ENCODE measurements at regions of chr6 and their contacts with region 1.

Region 1: GRCh38 chr6:132669690-132670291 is 10.8 kb upstream of the TAAR1 start:
- DNase-seq: no peak
- ATAC-seq: peak; percentile 52 to 65
- H3K4me3 ChIP-seq: no peak overlapping the region
- H3K27ac ChIP-seq: no peak overlapping the region
- H3K4me1 ChIP-seq: no peaks in the 10 kb centered on the region
- H3K27me3 ChIP-seq: no peaks in the 10 kb centered on the region

Region 2: GRCh38 chr6:132768051-132768517 is 98.3 kb after region 1 on chr6:
- intact Hi-C with region 1: loop called in 2 of 4 experiments (anchors 10 kb)
- DNase-seq: peak; percentile 17 to 61 (median 41)
- ATAC-seq: peak; percentile 80 to 82
- H3K4me3 ChIP-seq: no peak overlapping the region
- H3K27ac ChIP-seq: no peak overlapping the region
- H3K4me1 ChIP-seq: peaks cover 2% of the 10 kb centered on the region
- H3K27me3 ChIP-seq: no peaks in the 10 kb centered on the region

Measured in right cardiac atrium (tissue), 5 donors.